ENCODE measurements at regions of chr7 and their contacts with region 1.

Region 1: GRCh38 chr7:27179503-27180430 is 5.3 kb downstream of the HOXA11 start:
- DNase-seq: peak; percentile 68
- H3K4me3 Mint-ChIP-seq: no peak overlapping the region
- H3K27ac Mint-ChIP-seq: no peak overlapping the region
- H3K4me1 Mint-ChIP-seq: peaks cover 13% of the 10 kb centered on the region
- H3K27me3 Mint-ChIP-seq: peaks cover 69% of the 10 kb centered on the region

Region 2: GRCh38 chr7:25851332-25852210 is 1328.2 kb before region 1 on chr7:
- CTCF ChIA-PET with region 1: no interaction called
- POLR2A ChIA-PET with region 1: no interaction called
- intact Hi-C with region 1: loop called (anchors 5 kb)
- DNase-seq: peak; percentile 78
- H3K4me3 Mint-ChIP-seq: peak overlapping the region; percentile 65
- H3K27ac Mint-ChIP-seq: no peak overlapping the region
- H3K4me1 Mint-ChIP-seq: peaks cover 11% of the 10 kb centered on the region
- H3K27me3 Mint-ChIP-seq: peaks cover 51% of the 10 kb centered on the region

Region 3: GRCh38 chr7:26686448-26686981 is 493.3 kb before region 1 on chr7:
- CTCF ChIA-PET with region 1: interaction called, 11 read pairs
- POLR2A ChIA-PET with region 1: no interaction called
- intact Hi-C with region 1: no loop called
- DNase-seq: no peak
- H3K4me3 Mint-ChIP-seq: no peak overlapping the region
- H3K27ac Mint-ChIP-seq: no peak overlapping the region
- H3K4me1 Mint-ChIP-seq: no peaks in the 10 kb centered on the region
- H3K27me3 Mint-ChIP-seq: peaks cover 13% of the 10 kb centered on the region

Region 4: DNA sequence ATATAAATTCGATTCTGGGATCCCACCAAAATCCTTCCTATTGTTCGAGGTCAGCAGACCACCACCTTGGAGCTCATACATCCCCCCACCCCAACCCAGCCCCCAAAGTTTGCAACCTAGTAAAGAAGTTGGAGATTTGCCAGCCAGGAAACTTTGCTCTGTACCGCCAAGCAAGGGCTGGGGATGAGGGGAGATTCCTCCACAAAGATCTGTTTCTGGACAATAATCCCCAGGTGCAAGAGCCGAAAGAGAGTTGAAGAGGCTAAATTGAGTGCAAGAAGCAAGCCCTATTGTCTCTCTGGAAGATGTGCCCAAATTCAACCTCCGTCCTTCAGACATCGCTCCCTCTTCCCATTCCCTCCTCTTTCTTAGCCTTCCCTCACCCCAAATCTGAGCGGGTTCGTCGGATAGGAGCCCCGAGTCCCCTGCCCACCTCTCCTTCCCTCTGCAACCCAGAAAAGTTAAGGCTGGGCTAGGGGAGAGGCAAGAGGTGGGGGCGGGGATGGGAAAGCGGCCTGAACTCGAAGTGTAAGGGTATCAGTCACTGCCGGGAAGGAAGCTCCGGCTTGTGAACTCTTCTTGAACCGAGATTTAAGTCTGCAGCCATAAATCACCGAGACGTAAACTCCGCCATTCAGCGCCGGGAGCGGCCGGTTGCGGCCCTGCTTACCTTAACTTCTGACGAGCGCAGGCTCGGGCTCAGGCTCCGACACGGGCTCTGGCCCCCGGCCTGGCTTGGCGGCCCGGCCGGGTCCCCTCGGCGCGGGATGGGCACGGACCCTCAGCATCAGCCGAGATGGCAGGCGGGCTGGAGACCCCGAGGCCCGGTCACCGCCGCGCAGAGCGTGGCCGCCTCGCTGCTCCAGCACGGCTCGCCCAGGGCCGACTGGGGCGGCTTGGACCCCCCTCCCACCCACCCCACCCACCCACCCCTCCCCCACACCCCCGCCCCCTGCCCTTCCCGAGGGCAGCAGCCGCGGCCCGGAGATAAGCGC is 66.5 kb before region 1 on chr7:
- CTCF ChIA-PET with region 1: no interaction called
- POLR2A ChIA-PET with region 1: no interaction called
- intact Hi-C with region 1: no loop called
- DNase-seq: no peak
- H3K4me3 Mint-ChIP-seq: no peak overlapping the region
- H3K27ac Mint-ChIP-seq: no peak overlapping the region
- H3K4me1 Mint-ChIP-seq: no peaks in the 10 kb centered on the region
- H3K27me3 Mint-ChIP-seq: peaks cover 6% of the 10 kb centered on the region

Region 5: GRCh38 chr7:27137640-27138315 is 42.0 kb before region 1 on chr7:
- CTCF ChIA-PET with region 1: no interaction called
- POLR2A ChIA-PET with region 1: no interaction called
- intact Hi-C with region 1: no loop called
- DNase-seq: no peak
- H3K4me3 Mint-ChIP-seq: no peak overlapping the region
- H3K27ac Mint-ChIP-seq: no peak overlapping the region
- H3K4me1 Mint-ChIP-seq: peaks cover 17% of the 10 kb centered on the region
- H3K27me3 Mint-ChIP-seq: peaks cover 52% of the 10 kb centered on the region

Region 6: DNA sequence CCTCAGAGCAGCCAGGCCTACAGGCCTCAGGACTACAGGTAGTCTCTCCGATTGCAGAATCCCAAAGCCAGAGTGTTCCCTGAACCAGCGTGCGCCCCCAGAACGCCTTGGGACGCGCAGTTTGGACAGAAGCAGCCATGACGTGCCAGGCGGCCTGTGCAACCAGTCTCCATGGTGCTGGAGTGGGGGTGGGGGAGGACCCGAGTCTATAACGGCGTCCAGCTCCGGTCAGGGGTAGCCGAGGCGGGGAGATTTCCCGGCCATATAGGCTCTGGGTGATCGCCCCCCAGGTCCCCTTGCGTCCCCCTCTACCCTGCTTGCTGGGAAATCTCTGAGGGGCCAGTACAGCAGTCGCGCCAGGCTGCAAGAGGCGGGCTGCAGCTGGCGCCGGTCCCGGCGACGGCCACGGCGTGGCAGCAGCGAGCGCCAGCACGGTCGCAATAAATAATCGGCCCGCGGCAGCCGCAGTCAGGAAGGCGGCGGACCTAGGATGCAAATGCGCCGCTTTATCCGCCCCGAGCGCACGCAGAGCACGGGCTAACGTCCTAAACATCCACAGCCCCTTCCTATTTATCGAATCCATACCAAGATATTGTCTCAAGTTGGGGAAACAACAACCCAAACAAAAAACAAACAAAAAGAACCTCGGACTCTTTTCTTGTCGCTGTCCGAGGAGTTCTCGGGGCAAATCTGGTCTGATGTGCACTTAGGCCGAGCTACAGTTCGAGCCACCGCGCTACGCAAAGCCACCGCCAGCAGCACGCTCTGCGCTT is 29.0 kb before region 1 on chr7:
- CTCF ChIA-PET with region 1: interaction called, 11 read pairs
- POLR2A ChIA-PET with region 1: no interaction called
- intact Hi-C with region 1: no loop called
- DNase-seq: peak; percentile 76
- H3K4me3 Mint-ChIP-seq: peak overlapping the region; percentile 52
- H3K27ac Mint-ChIP-seq: no peak overlapping the region
- H3K4me1 Mint-ChIP-seq: peaks cover 38% of the 10 kb centered on the region
- H3K27me3 Mint-ChIP-seq: peaks cover 86% of the 10 kb centered on the region

Region 7: GRCh38 chr7:27166531-27167505 is 12.9 kb before region 1 on chr7:
- CTCF ChIA-PET with region 1: interaction called, 22 read pairs
- POLR2A ChIA-PET with region 1: no interaction called
- intact Hi-C with region 1: loop called (anchors 1 kb)
- DNase-seq: no peak
- H3K4me3 Mint-ChIP-seq: peak overlapping the region; percentile 47
- H3K27ac Mint-ChIP-seq: peak overlapping the region; percentile 16
- H3K4me1 Mint-ChIP-seq: peaks cover 27% of the 10 kb centered on the region
- H3K27me3 Mint-ChIP-seq: peaks cover 79% of the 10 kb centered on the region

Region 8: DNA sequence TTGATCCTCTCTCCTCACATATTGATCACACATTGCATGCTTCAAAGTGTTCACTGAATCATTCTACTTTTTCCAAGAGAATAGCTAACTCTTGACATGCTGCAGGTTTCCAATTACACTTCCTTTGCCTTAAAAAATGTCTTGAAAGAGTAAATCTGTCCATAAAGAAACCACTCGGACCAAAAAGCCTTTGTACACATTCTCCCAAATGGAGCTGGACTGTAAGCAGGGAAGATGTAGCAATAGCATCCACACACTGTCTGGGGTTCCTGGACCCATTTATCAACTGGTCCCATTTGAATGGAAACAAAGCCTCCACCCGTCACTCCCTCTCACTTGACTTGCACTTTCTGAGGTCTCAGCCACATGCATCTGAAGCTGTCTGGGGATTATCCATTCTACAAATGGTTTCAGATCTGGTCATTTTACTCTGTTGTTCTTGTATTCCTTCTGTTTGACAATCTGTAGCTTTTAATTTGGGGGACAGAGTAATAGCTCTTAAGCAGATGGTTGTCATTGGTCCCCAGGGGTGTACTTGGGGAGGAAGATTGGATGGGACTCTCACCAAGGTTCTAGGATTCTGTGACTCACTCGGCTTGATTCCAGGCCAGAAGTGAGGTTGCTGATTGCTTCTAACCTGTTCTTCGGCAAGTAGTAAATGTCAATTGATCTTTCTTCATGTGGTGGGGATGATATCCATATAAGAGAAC is 279.4 kb after region 1 on chr7:
- CTCF ChIA-PET with region 1: no interaction called
- POLR2A ChIA-PET with region 1: no interaction called
- intact Hi-C with region 1: no loop called
- DNase-seq: no peak
- H3K4me3 Mint-ChIP-seq: no peak overlapping the region
- H3K27ac Mint-ChIP-seq: no peak overlapping the region
- H3K4me1 Mint-ChIP-seq: no peaks in the 10 kb centered on the region
- H3K27me3 Mint-ChIP-seq: peaks cover 2% of the 10 kb centered on the region

Region 9: GRCh38 chr7:28037220-28038010 is 857.6 kb after region 1 on chr7:
- CTCF ChIA-PET with region 1: no interaction called
- POLR2A ChIA-PET with region 1: no interaction called
- intact Hi-C with region 1: no loop called
- DNase-seq: peak; percentile 41
- H3K4me3 Mint-ChIP-seq: no peak overlapping the region
- H3K27ac Mint-ChIP-seq: peak overlapping the region; percentile 39
- H3K4me1 Mint-ChIP-seq: peaks cover 43% of the 10 kb centered on the region
- H3K27me3 Mint-ChIP-seq: peaks cover 15% of the 10 kb centered on the region